SK-N-SH (cell line): ENCODE measurements at regions of chr4 and their contacts with region 1.

Region 1: DNA sequence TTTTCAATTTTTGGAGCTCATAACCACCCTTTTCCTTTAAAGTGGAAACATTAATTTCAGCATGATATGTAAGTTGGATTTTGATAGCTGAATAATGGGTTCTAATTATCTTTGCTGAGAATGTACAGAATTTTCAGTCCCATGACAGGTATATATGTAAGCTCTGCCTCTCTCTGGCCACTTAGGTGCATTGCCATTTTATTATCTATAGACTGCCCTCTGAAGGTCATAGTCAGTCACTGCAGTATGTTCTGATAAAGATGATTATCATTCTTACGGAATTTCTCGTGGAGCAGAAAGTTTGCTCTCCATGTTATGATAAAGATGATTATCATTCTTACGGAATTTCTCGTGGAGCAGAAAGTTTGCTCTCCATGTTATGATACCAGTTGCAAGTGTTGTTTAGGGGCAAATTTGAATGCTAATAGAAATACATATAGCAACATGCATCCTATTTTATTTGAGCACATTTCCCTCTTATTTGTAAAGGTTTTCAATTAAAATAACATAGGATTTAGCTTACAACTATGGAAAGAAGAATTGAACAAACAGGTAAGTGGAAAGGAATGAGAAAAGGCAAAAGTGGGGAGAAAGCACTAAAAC is 10.4 kb downstream of the AFP start:
- DNase-seq: peak; percentile 46
- H3K4me3 ChIP-seq: no peak overlapping the region; a peak in 1 of 4 replicates
- H3K27ac ChIP-seq: no peak overlapping the region
- H3K4me1 ChIP-seq: no peaks in the 10 kb centered on the region; a peak in 1 of 4 replicates
- H3K27me3 ChIP-seq: peaks cover 17% of the 10 kb centered on the region; the same call in 1 of the 2 replicates
- CTCF ChIP-seq: peak; percentile 86
- EP300 ChIP-seq: no peak
- RAD21 ChIP-seq: peak; percentile 59

Region 2: DNA sequence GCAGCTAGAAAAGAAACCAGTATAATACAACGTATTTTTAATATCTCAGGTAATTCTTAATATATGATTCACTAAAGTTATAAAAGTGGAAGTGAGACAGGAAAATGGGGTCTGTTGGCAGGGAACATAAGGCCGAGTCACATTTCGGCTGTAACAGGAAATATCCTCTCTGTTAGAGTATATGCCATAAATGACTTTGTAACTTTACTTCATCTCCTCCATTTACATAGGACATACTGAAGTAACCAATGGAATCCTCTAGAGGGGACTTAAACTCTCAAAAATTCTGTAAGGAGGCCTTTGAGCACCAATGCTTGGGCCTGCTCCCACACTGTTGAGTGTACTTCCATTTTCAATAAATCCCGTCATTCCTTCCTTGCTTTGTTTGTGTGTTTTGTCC is 259.1 kb before region 1 on chr4:
- CTCF ChIA-PET with region 1: no interaction called
- POLR2A ChIA-PET with region 1: no interaction called
- DNase-seq: no peak
- H3K4me3 ChIP-seq: no peak overlapping the region
- H3K27ac ChIP-seq: peak overlapping the region in 1 of 2 experiments; percentile 12; a peak in 2 of 4 replicates
- H3K4me1 ChIP-seq: peaks cover 0 to 4% of the 10 kb centered on the region in 2 experiments; a peak in 1 of 4 replicates
- H3K27me3 ChIP-seq: no peaks in the 10 kb centered on the region
- CTCF ChIP-seq: no peak
- EP300 ChIP-seq: no peak
- RAD21 ChIP-seq: no peak

Region 3: GRCh38 chr4:73311428-73311827 is 135.0 kb before region 1 on chr4:
- CTCF ChIA-PET with region 1: interaction called, 22 read pairs
- POLR2A ChIA-PET with region 1: no interaction called
- DNase-seq: no peak
- H3K4me3 ChIP-seq: no peak overlapping the region
- H3K27ac ChIP-seq: no peak overlapping the region
- H3K4me1 ChIP-seq: peaks cover 0 to 6% of the 10 kb centered on the region in 2 experiments; a peak in 1 of 4 replicates
- H3K27me3 ChIP-seq: no peaks in the 10 kb centered on the region
- CTCF ChIP-seq: peak; percentile 67
- EP300 ChIP-seq: no peak
- RAD21 ChIP-seq: peak; percentile 42

Region 4: DNA sequence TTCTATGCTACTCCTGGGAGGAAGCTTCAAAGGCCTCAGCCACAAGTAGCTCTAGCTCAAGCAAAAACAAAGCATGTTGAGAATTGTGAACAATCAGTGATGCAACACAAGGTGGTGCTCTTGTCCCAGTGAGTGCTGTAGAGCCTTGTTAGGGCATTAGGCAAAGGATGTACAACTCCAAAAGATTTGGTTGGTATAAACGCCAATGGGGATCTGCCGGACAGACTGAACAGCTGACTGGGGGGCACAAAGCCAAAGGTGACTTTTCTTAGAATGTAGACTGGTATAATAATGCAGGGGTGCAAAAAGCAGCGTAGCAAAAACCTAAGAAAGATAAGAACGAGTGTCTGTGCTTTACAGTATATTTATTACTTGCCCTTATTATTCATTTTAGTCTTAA is 105.0 kb before region 1 on chr4:
- CTCF ChIA-PET with region 1: interaction called, 14 read pairs
- POLR2A ChIA-PET with region 1: no interaction called
- DNase-seq: peak; percentile 11
- H3K4me3 ChIP-seq: peak overlapping the region in 1 of 2 experiments; percentile 36; a peak in 1 of 4 replicates
- H3K27ac ChIP-seq: no peak overlapping the region
- H3K4me1 ChIP-seq: no peaks in the 10 kb centered on the region
- H3K27me3 ChIP-seq: peaks cover 12% of the 10 kb centered on the region; the same call in 1 of the 2 replicates
- CTCF ChIP-seq: peak; percentile 53
- EP300 ChIP-seq: no peak
- RAD21 ChIP-seq: peak; percentile 62

Region 5: GRCh38 chr4:73426666-73427065 is 19.8 kb before region 1 on chr4:
- CTCF ChIA-PET with region 1: interaction called, 15 read pairs
- POLR2A ChIA-PET with region 1: no interaction called
- DNase-seq: no peak
- H3K4me3 ChIP-seq: no peak overlapping the region
- H3K27ac ChIP-seq: no peak overlapping the region
- H3K4me1 ChIP-seq: no peaks in the 10 kb centered on the region
- H3K27me3 ChIP-seq: peaks cover 6% of the 10 kb centered on the region; the same call in 1 of the 2 replicates
- CTCF ChIP-seq: no peak
- EP300 ChIP-seq: no peak
- RAD21 ChIP-seq: no peak

Region 6: GRCh38 chr4:73434311-73434710 is 12.1 kb before region 1 on chr4:
- CTCF ChIA-PET with region 1: interaction called, 17 read pairs
- POLR2A ChIA-PET with region 1: no interaction called
- DNase-seq: peak; percentile 12
- H3K4me3 ChIP-seq: no peak overlapping the region
- H3K27ac ChIP-seq: no peak overlapping the region
- H3K4me1 ChIP-seq: no peaks in the 10 kb centered on the region
- H3K27me3 ChIP-seq: peaks cover 6% of the 10 kb centered on the region; the same call in 1 of the 2 replicates
- CTCF ChIP-seq: peak; percentile 58
- EP300 ChIP-seq: no peak
- RAD21 ChIP-seq: peak; percentile 5; the same call in 1 of the 2 replicates

Region 7: GRCh38 chr4:73487233-73487632 is 40.8 kb after region 1 on chr4:
- CTCF ChIA-PET with region 1: no interaction called
- POLR2A ChIA-PET with region 1: no interaction called
- DNase-seq: no peak
- H3K4me3 ChIP-seq: no peak overlapping the region
- H3K27ac ChIP-seq: no peak overlapping the region
- H3K4me1 ChIP-seq: no peaks in the 10 kb centered on the region
- H3K27me3 ChIP-seq: peaks cover 14% of the 10 kb centered on the region
- CTCF ChIP-seq: no peak
- EP300 ChIP-seq: no peak
- RAD21 ChIP-seq: no peak